Pancreas (tissue), 10 donors: ENCODE measurements at regions of chr17 and their contacts with region 1.

Region 1: DNA sequence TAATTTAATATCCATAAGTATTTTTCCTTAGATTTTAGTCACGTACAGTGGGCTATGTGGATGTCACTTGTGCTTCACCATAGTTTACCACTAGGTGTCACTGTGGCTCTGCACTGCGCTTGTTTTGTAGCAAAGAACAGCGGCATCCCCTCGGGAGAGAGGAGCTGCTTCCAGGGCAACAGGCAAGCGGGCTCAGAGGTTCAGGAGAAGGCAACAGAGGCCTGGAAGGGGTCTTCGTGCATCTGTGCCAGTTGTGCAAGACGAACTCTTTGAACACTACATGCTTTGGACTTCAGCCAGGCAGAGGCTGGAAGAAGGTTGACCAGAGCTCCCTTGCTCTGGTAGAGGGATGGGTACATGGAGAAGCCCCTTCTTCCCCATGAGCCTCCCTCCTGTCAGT is 20.6 kb downstream of the CYB561 start:
- DNase-seq: peak in 5 of 6 donors; percentile 56 to 79 (median 65)
- ATAC-seq: peak; percentile 78 to 97 (median 92)
- H3K4me3 ChIP-seq: no peak overlapping the region
- H3K27ac ChIP-seq: no peak overlapping the region
- H3K4me1 ChIP-seq: no peaks in the 10 kb centered on the region
- H3K27me3 ChIP-seq: no peaks in the 10 kb centered on the region
- CTCF ChIP-seq: peak; percentile 83 to 95 (median 91)

Region 2: GRCh38 chr17:63478791-63479494 is 53.5 kb after region 1 on chr17:
- intact Hi-C with region 1: loop called in 2 of 3 experiments (anchors 5 to 10 kb)
- DNase-seq: peak; percentile 80 to 93 (median 86)
- ATAC-seq: peak; percentile 73 to 87 (median 80)
- H3K4me3 ChIP-seq: no peak overlapping the region
- H3K27ac ChIP-seq: no peak overlapping the region
- H3K4me1 ChIP-seq: peaks cover 5 to 19% (median 12%) of the 10 kb centered on the region in 3 donors
- H3K27me3 ChIP-seq: no peaks in the 10 kb centered on the region
- CTCF ChIP-seq: peak; percentile 65 to 72 (median 70)

Region 3: GRCh38 chr17:63611354-63611753 is 185.9 kb after region 1 on chr17:
- intact Hi-C with region 1: loop called in 2 of 3 experiments (anchors 5 kb)
- DNase-seq: no peak
- ATAC-seq: no peak
- H3K4me3 ChIP-seq: no peak overlapping the region
- H3K27ac ChIP-seq: no peak overlapping the region
- H3K4me1 ChIP-seq: no peaks in the 10 kb centered on the region
- H3K27me3 ChIP-seq: no peaks in the 10 kb centered on the region
- CTCF ChIP-seq: no peak

Region 4: DNA sequence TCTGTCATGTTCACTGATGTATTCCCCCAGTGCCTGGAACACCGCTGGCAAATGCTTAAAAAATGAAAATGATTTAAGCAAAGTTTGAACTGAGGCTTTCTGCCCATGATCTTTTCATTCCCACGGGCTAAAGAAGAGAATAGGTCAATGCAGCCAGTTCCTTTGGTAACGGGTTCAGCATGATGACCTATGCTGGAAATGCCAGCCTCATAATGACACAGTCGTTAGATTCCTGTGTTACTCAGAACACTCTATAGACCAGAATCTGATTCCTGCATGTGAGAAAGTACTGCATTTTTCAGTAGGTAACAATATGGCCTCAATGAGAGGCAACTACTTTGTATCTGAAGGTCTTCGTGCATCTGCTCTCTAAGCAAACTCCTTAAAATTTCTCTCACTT is 293.5 kb after region 1 on chr17:
- intact Hi-C with region 1: no loop called
- DNase-seq: no peak
- ATAC-seq: no peak
- H3K4me3 ChIP-seq: no peak overlapping the region
- H3K27ac ChIP-seq: no peak overlapping the region
- H3K4me1 ChIP-seq: no peaks in the 10 kb centered on the region
- H3K27me3 ChIP-seq: no peaks in the 10 kb centered on the region
- CTCF ChIP-seq: no peak